ENCODE measurements at regions of chr19 and their contacts with region 1.

Region 1: GRCh38 chr19:6551607-6552450 is 21.0 kb downstream of the TNFSF9 start:
- DNase-seq: peak; percentile 86
- CTCF ChIP-seq: peak; percentile 40

Region 2: GRCh38 chr19:6318772-6319171 is 233.1 kb before region 1 on chr19:
- CTCF ChIA-PET with region 1: no interaction called
- POLR2A ChIA-PET with region 1: no interaction called
- DNase-seq: no peak
- CTCF ChIP-seq: no peak

Region 3: DNA sequence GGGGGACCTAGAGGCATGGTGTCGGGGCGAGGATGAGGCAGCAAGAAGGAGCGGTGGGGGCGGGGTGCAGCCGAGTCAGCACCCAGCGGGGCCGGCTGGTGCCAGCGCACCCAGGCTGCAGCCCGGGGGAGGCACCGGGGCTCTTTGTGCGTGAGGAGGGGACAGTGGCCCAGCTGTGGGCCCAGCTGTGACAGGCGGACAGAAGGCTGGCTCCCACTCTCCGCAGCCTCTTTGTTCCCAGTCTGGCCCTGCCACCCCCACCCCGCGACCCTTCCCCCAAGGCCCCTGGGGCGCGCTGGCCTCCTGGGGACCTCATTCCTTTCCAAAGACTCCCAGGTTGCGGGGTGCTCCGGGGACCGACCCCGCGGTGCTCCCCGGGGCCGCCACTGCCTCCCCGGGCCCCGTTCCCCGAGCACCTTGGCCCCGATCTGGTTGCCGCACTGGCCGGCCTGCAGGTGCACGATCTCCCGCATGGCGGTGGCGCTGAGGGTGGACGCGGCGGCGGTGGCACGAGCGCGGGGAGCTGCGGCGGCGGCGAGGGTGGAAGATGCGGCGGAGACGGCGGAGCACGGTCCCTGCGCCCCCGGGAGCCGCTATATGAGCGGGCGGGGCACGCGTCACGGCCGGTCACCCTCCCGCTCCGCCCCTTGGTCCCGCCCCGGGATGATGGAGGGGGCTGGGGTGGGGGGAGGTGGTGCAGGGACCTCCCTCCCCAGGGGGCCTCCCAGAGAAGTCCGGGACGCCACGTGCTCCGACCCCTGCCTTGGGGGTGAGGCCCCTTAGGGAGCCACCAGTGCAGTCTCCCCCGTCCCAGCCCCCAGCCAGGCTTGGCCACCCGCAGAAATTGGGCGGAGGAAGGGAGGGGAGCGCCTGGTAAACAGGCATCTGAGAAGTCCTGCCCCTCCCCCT is 49.8 kb before region 1 on chr19 and contains the start of gene TUBB4A:
- CTCF ChIA-PET with region 1: no interaction called
- POLR2A ChIA-PET with region 1: no interaction called
- DNase-seq: peak; percentile 77
- CTCF ChIP-seq: no peak

Region 4: DNA sequence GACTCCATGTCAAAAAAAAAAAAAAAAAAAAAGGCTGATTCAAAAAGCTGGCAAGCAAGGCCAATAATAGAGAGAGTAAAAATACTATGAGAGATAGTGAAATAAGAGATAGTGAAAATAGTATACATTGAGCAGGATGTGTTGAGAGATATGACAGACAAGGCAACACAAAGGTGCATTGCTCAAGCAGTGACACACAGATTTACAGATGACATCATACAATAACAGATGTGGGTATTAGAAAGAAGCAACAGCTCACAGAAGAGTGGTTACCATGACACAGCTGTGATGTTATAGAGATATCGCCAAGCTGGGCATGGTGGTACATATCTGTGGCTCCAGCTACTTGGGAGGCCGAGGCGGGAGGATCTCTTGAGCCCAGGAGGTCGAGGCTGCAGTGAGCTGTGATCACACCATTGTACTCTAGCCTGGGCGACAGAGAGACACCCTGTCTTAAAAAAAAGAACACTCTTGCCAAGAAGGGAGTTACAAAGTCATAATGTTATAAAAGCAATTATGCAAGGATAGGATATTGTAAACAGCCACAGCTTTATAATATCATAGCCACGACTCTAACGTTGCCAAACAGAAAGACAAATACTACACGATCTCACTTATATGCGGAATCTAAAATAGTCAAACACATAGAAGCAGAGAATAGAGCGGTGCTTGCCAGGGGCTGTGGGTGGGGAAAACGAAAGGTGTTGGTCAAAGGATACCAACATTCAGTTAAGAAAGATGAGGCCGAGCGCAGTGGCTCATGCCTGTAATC is 10.7 kb before region 1 on chr19:
- CTCF ChIA-PET with region 1: interaction called, 8 read pairs
- POLR2A ChIA-PET with region 1: interaction called, 37 read pairs
- DNase-seq: no peak
- CTCF ChIP-seq: no peak

Region 5: DNA sequence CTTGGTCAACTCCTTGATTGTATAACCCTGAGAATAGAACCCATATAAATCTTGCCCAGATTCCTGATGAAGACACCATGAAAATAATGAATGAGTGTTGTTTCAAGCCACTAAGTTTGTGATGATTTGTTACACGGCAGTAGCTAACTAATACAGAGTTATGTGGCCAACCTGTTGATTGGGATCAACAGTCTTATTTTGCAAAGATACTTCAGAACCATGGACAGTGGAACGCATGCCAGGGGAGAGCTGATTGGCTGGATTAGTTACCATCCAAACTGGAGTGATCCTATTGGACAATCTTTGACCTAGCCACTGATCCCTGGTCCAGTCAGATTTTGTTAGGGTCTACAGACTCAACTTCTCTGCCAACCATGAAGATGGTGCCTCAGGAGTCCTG is 12.6 kb after region 1 on chr19:
- CTCF ChIA-PET with region 1: interaction called, 13 read pairs
- POLR2A ChIA-PET with region 1: interaction called, 5 read pairs
- DNase-seq: no peak
- CTCF ChIP-seq: no peak

Region 6: GRCh38 chr19:6577476-6578125 is 25.8 kb after region 1 on chr19:
- CTCF ChIA-PET with region 1: interaction called, 18 read pairs
- POLR2A ChIA-PET with region 1: interaction called, 12 read pairs
- DNase-seq: peak; percentile 72
- CTCF ChIP-seq: no peak

Region 7: GRCh38 chr19:6602729-6603114 is 50.9 kb after region 1 on chr19:
- CTCF ChIA-PET with region 1: interaction called, 11 read pairs
- POLR2A ChIA-PET with region 1: no interaction called
- DNase-seq: no peak
- CTCF ChIP-seq: no peak

Region 8: DNA sequence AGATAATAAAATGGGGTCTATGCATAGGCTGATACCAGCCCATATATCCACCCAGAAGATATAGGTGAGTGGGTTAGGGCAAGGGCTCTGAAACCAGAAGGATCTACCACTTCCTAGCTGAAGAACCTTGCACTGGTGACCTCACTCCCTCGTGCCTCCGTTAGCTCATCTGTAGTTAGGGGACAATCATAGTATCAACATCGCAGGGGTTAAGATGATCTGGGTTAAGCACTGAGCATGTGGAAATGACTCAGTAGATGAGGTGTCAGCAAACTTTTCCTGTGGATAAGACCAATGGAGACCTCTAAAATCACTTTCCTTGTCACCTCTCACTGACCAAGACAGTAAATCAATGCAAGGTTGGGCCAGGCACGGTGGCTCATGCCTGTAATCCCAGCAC is 87.6 kb after region 1 on chr19:
- CTCF ChIA-PET with region 1: no interaction called
- POLR2A ChIA-PET with region 1: no interaction called
- DNase-seq: no peak
- CTCF ChIP-seq: no peak

Region 9: GRCh38 chr19:6654347-6655310 is 102.8 kb after region 1 on chr19:
- CTCF ChIA-PET with region 1: no interaction called
- POLR2A ChIA-PET with region 1: no interaction called
- DNase-seq: peak; percentile 63
- CTCF ChIP-seq: no peak

Measured in GM10248 (cell line).